ENCODE measurements at regions of chr6 and their contacts with region 1.

Region 1: GRCh38 chr6:45922728-45923351 is 92.8 kb downstream of the CLIC5 start:
- DNase-seq: peak; percentile 51
- H3K4me3 ChIP-seq: no peak overlapping the region
- H3K27ac ChIP-seq: no peak overlapping the region
- H3K4me1 ChIP-seq: no peaks in the 10 kb centered on the region
- H3K27me3 ChIP-seq: no peaks in the 10 kb centered on the region
- CTCF ChIP-seq: no peak

Region 2: GRCh38 chr6:44475779-44476434 is 1446.9 kb before region 1 on chr6:
- intact Hi-C with region 1: loop called (anchors 5 kb)
- DNase-seq: peak; percentile 82
- H3K4me3 ChIP-seq: no peak overlapping the region
- H3K27ac ChIP-seq: no peak overlapping the region
- H3K4me1 ChIP-seq: no peaks in the 10 kb centered on the region
- H3K27me3 ChIP-seq: no peaks in the 10 kb centered on the region
- CTCF ChIP-seq: peak; percentile 89

Region 3: DNA sequence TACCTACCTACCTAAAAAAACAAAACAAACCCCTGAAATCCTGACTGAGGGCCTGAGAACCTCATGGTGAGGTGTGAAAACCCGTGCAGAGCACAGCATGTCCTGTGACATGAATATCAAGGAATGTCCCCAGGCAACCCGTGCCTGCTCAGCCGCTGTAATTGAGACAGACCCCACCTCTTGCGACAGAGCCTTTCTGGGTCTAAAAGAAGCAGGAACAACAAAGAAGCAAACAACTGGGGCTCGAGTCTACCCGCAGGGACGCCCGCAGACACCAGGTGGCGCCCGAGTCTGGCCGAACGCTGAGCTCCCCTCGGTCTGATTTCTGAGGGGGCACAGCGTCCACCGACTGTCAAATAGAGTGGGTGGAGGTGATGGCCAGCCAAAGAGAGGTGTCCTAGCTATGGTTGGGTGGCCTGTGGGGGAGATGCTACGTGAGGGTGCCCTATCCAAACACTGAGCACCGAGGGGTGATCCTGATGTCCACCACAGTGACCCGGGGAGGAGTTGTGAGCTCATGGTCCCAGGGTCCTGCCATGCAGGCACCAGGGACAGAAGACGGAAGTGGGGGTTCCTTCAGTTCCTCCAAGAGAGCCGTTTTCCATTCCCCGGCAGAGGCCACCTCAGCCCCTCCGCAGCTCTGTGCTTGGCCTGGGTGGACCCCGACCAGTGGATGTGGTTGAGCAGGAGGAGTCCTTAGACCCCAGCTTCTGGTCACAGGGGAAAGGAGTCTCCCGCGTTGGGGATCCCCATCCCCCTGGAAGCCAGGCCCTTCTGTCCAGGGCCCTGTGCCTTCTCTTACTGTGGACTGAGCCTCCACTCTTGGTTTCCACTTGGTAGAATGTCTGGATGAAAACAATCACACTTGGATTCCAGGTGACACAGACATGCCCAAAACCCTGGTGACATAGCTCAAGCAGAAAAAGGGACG is 1267.2 kb before region 1 on chr6:
- intact Hi-C with region 1: loop called (anchors 5 kb)
- DNase-seq: peak; percentile 69
- H3K4me3 ChIP-seq: no peak overlapping the region
- H3K27ac ChIP-seq: no peak overlapping the region
- H3K4me1 ChIP-seq: no peaks in the 10 kb centered on the region
- H3K27me3 ChIP-seq: no peaks in the 10 kb centered on the region
- CTCF ChIP-seq: peak; percentile 97

Region 4: DNA sequence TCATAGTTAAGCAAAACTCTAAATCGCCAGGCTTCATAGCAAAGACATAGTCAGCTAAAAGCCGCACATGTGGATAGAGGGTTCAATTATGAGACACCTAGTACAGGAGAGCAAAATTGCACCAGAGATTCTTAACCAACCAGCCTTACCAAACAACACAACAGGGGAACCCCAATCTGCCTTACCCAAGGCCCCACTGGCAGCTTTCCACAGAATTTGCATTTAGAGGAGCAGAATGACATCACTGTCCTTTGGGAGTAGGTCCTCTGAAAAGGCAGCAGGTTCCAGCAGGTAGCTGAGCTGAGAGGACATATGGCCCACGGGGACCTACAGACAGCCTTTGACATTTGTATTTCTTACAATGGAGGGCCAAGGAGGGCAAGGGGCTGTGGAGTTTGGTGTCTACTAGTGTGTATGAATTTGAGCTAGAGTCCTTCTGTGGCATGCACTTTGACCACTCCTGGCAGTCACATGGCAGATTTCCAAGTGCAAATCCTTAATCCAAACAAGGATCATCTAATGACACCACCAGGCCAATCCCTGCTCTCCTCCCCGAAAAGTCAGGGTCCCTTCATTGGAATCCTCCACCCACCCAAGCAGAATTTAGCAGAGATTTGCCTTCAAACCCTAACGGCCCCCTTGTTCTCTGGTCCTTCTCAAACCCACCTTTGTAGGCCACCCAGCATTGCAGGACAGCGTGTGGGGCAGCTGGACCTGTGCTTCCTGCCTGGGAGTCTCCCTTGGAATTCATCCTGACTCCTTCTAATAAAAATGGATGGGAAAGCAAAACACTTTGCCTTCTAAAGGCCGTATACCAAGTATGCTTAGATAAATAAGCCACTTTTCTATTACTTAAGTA is 374.0 kb before region 1 on chr6:
- intact Hi-C with region 1: no loop called
- DNase-seq: no peak
- H3K4me3 ChIP-seq: no peak overlapping the region
- H3K27ac ChIP-seq: no peak overlapping the region
- H3K4me1 ChIP-seq: no peaks in the 10 kb centered on the region
- H3K27me3 ChIP-seq: no peaks in the 10 kb centered on the region
- CTCF ChIP-seq: no peak

Region 5: GRCh38 chr6:46390153-46390876 is 467.5 kb after region 1 on chr6:
- intact Hi-C with region 1: loop called (anchors 10 kb)
- DNase-seq: no peak
- H3K4me3 ChIP-seq: no peak overlapping the region
- H3K27ac ChIP-seq: no peak overlapping the region
- H3K4me1 ChIP-seq: no peaks in the 10 kb centered on the region
- H3K27me3 ChIP-seq: no peaks in the 10 kb centered on the region
- CTCF ChIP-seq: no peak

Measured in colonic mucosa (tissue), 4 donors.